PC-9 (cell line): ENCODE measurements at regions of chr1 and their contacts with region 1.

Region 1: DNA sequence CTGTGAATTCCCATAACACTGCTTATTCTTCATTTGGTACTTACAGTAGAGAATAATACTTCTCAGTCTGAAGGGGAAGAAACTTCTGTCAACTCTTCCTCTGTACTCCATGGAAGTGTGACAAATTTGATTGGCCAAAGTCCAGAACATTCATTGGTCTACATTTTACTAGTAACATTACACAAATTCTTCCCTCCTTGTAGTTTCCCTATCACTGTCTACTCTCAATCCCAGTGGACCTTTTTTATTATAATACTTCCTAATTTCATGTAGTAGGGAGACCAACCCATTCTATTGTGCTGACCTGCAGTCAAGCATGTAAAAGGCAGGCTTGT is 74.7 kb downstream of the ALG6 start:
- DNase-seq: no peak
- H3K4me3 ChIP-seq: no peak overlapping the region
- H3K27ac ChIP-seq: no peak overlapping the region
- H3K4me1 ChIP-seq: no peaks in the 10 kb centered on the region
- H3K27me3 ChIP-seq: no peaks in the 10 kb centered on the region
- CTCF ChIP-seq: no peak

Region 2: DNA sequence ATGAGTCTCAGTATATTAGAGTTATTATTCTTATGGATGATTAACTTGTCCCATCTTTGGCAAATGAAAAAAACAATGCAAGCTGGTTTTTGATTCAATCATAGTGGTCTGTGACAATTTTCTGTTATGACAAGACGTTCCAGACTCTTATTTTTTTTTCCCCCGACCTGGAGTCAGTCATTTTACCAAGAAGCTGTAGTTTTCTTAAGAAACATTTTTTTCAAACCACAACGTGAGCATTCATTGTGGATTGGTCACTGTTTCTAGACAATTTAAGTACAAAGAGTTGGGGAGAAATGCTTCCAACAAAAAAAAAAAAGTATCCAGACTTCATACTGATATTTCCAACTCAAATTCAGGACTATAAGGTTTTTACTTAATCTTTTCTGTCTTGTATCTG is 852.8 kb before region 1 on chr1:
- CTCF ChIA-PET with region 1: no interaction called
- POLR2A ChIA-PET with region 1: interaction called, 20 read pairs
- intact Hi-C with region 1: no loop called
- DNase-seq: no peak
- H3K4me3 ChIP-seq: no peak overlapping the region
- H3K27ac ChIP-seq: no peak overlapping the region
- H3K4me1 ChIP-seq: no peaks in the 10 kb centered on the region
- H3K27me3 ChIP-seq: no peaks in the 10 kb centered on the region
- CTCF ChIP-seq: no peak

Region 3: DNA sequence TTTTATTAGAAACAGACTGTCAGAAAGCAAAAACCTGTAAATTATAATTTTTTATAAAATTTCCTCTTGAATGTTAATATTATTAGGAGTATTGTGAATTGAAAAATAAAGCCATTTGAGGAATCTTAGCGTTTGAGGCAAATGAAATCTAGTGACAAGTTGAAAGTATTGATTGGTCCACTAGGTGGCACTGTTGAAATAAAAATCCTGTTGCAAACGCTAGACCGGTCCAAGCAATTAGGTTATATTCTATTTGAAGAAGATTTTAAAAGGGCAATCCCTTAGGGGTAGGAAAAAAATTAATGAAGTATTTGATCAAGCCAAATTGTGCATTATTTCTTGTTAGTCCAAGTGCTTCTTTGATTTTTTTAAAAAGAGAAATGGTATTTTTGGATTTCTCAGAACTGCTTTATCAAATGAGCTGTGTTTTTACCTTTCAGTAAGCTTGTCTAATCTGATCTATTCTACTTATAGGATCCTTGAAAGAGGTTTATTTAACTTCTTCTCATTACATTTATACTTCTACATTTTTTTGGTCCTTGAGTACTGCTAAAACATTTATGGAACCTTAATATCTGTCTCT is 600.4 kb before region 1 on chr1:
- CTCF ChIA-PET with region 1: no interaction called
- POLR2A ChIA-PET with region 1: no interaction called
- intact Hi-C with region 1: loop called (anchors 1 kb)
- DNase-seq: peak in 1 of 2 experiments; percentile 46
- H3K4me3 ChIP-seq: no peak overlapping the region
- H3K27ac ChIP-seq: no peak overlapping the region
- H3K4me1 ChIP-seq: no peaks in the 10 kb centered on the region
- H3K27me3 ChIP-seq: no peaks in the 10 kb centered on the region
- CTCF ChIP-seq: peak; percentile 83

Region 4: DNA sequence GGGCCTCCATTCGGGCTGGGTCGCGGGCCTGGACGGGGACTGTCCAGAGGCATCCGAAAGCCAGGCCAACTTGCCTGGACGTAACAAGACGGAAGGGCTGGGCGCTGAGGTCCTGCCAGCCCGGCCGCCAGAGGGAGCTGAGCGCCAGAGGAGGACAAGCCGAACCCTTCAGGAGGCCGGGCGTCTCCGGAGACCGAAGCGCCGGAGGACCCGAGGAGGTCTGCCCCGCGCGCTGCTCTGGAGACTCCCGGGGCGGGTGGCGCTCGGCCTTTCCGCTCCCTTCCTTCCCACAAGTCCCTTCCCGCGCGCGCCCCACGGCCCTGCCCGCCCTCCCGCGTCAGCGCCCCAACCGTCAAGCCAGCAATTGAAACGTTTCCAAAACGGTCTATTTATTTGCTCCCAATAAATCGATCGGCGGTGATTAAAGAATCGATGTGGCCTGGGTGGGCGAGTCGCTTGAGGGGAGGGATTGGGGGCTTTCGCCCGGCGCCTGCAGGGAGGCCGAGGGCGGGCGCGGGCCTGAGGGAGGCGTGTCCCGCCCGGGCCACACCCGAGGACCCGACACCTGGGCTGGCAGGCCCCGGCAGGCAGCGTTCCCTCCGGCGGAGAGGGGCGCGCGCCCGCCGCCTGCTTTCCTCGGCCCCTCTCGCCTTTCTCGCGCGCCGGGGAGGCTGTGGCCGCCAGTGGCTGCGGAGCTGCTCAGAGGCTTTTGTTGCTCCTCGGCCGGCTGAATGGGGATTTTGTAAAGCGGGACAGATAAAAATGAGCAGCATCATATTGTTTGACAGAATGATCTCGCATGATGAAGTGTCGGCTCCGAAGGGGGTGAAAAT is 124.9 kb before region 1 on chr1:
- CTCF ChIA-PET with region 1: no interaction called
- POLR2A ChIA-PET with region 1: no interaction called
- intact Hi-C with region 1: loop called (anchors 1 kb)
- DNase-seq: peak; percentile 68 to 87
- H3K4me3 ChIP-seq: peak overlapping the region; percentile 70
- H3K27ac ChIP-seq: no peak overlapping the region
- H3K4me1 ChIP-seq: peaks cover 6% of the 10 kb centered on the region
- H3K27me3 ChIP-seq: peaks cover 21% of the 10 kb centered on the region; the same call in 1 of the 2 replicates
- CTCF ChIP-seq: peak; percentile 77